PC-3 (cell line): ENCODE measurements at regions of chr19 and their contacts with region 1.

Region 1: DNA sequence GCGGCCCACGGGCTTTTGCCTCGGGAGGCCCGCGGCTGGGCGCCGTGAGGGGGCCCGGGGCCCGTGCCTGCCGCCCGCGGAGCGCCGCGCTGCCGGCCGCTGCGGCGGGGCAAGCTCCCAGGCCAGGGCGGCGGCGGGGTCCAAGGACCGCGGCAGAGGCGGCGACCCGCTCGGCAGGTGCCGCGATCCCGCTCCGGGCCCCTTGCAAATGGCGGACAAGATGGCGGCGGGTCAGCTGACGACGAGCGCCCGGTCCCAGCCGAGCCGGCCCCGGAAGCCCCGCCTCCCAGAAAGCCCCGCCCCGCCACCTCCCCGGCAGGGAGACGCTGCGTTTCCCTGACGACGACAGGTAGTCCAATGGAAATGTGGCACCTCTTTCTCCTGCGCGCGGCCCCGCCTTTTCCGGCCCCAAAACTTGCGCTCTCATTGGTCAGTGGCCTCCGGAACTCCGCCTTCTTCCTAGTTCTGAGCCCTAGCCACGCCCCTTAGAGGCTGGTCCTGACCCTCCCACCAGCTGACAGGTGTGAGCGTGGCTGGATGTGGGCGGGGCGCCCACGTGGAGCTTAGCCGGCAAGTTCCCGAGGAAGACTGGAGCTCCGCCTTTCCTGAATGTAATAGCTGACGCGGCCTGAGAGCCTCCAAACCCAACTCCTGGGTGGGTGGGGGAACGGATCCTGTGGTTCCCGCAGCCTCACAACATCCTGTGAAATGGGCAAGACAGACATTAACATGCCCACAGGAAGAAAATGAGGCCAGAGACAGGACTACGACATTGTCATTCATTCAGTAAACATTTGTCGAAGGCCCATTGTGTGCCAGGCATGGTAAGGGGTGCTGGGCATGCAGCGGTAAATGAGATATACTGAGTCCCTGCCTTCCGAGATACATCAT is at the start of gene AP3D1:
- DNase-seq: peak; percentile 98
- ATAC-seq: peak; percentile 87
- H3K4me3 ChIP-seq: peak within 1 kb of the TSS; percentile 98
- H3K27ac ChIP-seq: peak within 1 kb of the TSS; percentile 64
- H3K4me1 ChIP-seq: peaks cover 13% of the 10 kb centered on the region
- H3K27me3 ChIP-seq: no peaks in the 10 kb centered on the region
- CTCF ChIP-seq: no peak
- total RNA-seq, gene AP3D1: 103 and 142 TPM in 2 replicates

Region 2: GRCh38 chr19:2096480-2097329 is 54.9 kb before region 1 on chr19 and contains the start of gene IZUMO4:
- CTCF ChIA-PET with region 1: no interaction called
- POLR2A ChIA-PET with region 1: no interaction called
- intact Hi-C with region 1: loop called (anchors 5 kb)
- DNase-seq: peak; percentile 94
- ATAC-seq: peak; percentile 85
- H3K4me3 ChIP-seq: peak within 1 kb of the TSS; percentile 87
- H3K27ac ChIP-seq: peak within 1 kb of the TSS; percentile 71
- H3K4me1 ChIP-seq: peaks cover 5% of the 10 kb centered on the region; the same call in 1 of the 2 replicates
- H3K27me3 ChIP-seq: no peaks in the 10 kb centered on the region
- CTCF ChIP-seq: peak; percentile 37
- total RNA-seq, gene IZUMO4: 1.0 and 3.6 TPM in 2 replicates

Region 3: DNA sequence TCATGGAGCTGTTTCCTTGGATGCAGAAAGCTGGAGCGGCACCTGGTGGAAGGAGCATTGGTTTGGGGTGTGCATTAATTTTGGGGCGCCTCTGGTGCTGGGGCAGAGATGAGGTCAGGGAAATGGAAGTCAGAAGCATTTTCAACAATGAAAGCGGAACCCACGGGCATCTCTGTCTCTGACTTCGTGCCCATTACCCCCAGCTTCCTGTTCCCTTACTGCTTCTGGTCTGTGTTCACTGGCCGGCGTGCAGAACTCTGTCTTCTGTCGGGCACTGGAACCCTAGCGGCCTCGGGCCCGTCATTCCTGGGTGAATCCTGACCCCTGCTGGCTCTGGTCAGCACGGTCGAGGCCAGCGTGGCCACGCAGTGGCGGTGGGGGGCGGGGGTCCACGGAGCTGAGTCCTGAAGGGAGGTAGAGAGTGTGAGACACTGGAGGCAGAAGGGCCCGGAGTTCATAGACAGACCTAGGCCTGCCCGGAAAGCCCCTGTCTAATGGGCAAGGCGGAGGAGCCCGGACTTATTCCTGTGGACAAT is 164.3 kb after region 1 on chr19:
- CTCF ChIA-PET with region 1: no interaction called
- POLR2A ChIA-PET with region 1: no interaction called
- intact Hi-C with region 1: loop called (anchors 1 kb)
- DNase-seq: peak; percentile 46
- ATAC-seq: peak; percentile 90
- H3K4me3 ChIP-seq: no peak overlapping the region
- H3K27ac ChIP-seq: no peak overlapping the region
- H3K4me1 ChIP-seq: no peaks in the 10 kb centered on the region
- H3K27me3 ChIP-seq: no peaks in the 10 kb centered on the region
- CTCF ChIP-seq: peak; percentile 67